CD4-positive, alpha-beta memory T cell (primary cell): ENCODE measurements at regions of chr10 and their contacts with region 1.

Region 1: DNA sequence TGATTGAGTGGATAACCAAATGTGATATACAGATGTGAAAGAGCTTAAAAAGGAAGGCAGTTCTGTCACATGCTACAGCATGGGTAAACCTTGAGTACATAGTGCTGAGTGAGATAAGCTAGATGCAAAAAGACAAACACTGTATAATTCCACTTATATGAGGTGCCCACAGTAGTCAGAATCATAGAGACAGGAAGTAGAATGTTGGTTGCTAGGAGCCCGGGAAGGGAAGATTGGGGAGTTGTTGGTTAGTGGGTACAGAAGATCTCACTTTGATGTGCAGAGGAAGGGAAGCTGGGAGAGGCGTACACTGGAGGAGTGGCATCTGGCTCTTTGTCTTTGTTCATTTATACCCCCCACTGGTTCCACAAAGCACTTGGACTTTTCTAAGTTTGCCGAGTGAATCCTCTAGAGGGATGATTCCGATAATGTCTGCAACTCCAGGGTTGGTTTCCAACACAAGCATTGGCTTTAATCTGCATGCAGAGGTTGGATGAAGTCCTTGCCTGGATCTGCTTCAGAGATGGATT is 39.5 kb downstream of the TSPAN14 start:
- DNase-seq: peak in 4 of 5 donors; percentile 49 to 73 (median 52)
- H3K4me3 ChIP-seq: no peak overlapping the region
- H3K4me3 Mint-ChIP-seq: peak overlapping the region; percentile 49 to 81 (median 70)
- H3K27ac ChIP-seq: peak overlapping the region; percentile 41
- H3K27ac Mint-ChIP-seq: peak overlapping the region; percentile 53 to 87 (median 77)
- H3K4me1 ChIP-seq: peaks cover 100% of the 10 kb centered on the region
- H3K4me1 Mint-ChIP-seq: peaks cover 90 to 100% (median 94%) of the 10 kb centered on the region in 4 donors
- H3K27me3 ChIP-seq: no peaks in the 10 kb centered on the region
- H3K27me3 Mint-ChIP-seq: no peaks in the 10 kb centered on the region

Region 2: GRCh38 chr10:80453701-80454513 is 39.7 kb before region 1 on chr10 and contains the start of gene TSPAN14:
- CTCF ChIA-PET with region 1: interaction called, 814 read pairs
- POLR2A ChIA-PET with region 1: interaction called, 906 read pairs
- intact Hi-C with region 1: loop called (anchors 1 kb)
- DNase-seq: peak; percentile 66 to 76 (median 73)
- H3K4me3 ChIP-seq: peak within 1 kb of the TSS; percentile 70 to 76
- H3K4me3 Mint-ChIP-seq: peak within 1 kb of the TSS; percentile 90 to 100 (median 98)
- H3K27ac ChIP-seq: peak within 1 kb of the TSS; percentile 83
- H3K27ac Mint-ChIP-seq: peak within 1 kb of the TSS; percentile 93 to 100 (median 96)
- H3K4me1 ChIP-seq: peaks cover 31% of the 10 kb centered on the region
- H3K4me1 Mint-ChIP-seq: peaks cover 29 to 53% (median 35%) of the 10 kb centered on the region in 4 donors
- H3K27me3 ChIP-seq: no peaks in the 10 kb centered on the region
- H3K27me3 Mint-ChIP-seq: no peaks in the 10 kb centered on the region
- total RNA-seq, gene TSPAN14: 151 to 153 TPM

Region 3: GRCh38 chr10:80459047-80459931 is 34.3 kb before region 1 on chr10:
- CTCF ChIA-PET with region 1: interaction called, 814 read pairs
- POLR2A ChIA-PET with region 1: interaction called, 906 read pairs
- intact Hi-C with region 1: loop called (anchors 1 kb)
- DNase-seq: peak; percentile 51 to 83 (median 66)
- H3K4me3 ChIP-seq: peak overlapping the region; percentile 67 to 76
- H3K4me3 Mint-ChIP-seq: peak overlapping the region; percentile 90 to 100 (median 98)
- H3K27ac ChIP-seq: peak overlapping the region; percentile 83
- H3K27ac Mint-ChIP-seq: peak overlapping the region; percentile 88 to 100 (median 96)
- H3K4me1 ChIP-seq: peaks cover 84% of the 10 kb centered on the region
- H3K4me1 Mint-ChIP-seq: peaks cover 71 to 93% (median 79%) of the 10 kb centered on the region in 4 donors
- H3K27me3 ChIP-seq: no peaks in the 10 kb centered on the region
- H3K27me3 Mint-ChIP-seq: no peaks in the 10 kb centered on the region

Region 4: GRCh38 chr10:80464557-80465450 is 28.8 kb before region 1 on chr10:
- CTCF ChIA-PET with region 1: interaction called, 516 read pairs
- POLR2A ChIA-PET with region 1: interaction called, 906 read pairs
- intact Hi-C with region 1: no loop called
- DNase-seq: no peak
- H3K4me3 ChIP-seq: peak overlapping the region; percentile 48 to 58
- H3K4me3 Mint-ChIP-seq: peak overlapping the region; percentile 83 to 100 (median 96)
- H3K27ac ChIP-seq: peak overlapping the region; percentile 83
- H3K27ac Mint-ChIP-seq: peak overlapping the region; percentile 93 to 100 (median 96)
- H3K4me1 ChIP-seq: peaks cover 100% of the 10 kb centered on the region
- H3K4me1 Mint-ChIP-seq: peaks cover 79 to 100% (median 93%) of the 10 kb centered on the region in 4 donors
- H3K27me3 ChIP-seq: no peaks in the 10 kb centered on the region
- H3K27me3 Mint-ChIP-seq: no peaks in the 10 kb centered on the region

Region 5: GRCh38 chr10:80609331-80609730 is 115.7 kb after region 1 on chr10:
- CTCF ChIA-PET with region 1: no interaction called
- POLR2A ChIA-PET with region 1: no interaction called
- intact Hi-C with region 1: no loop called
- DNase-seq: no peak
- H3K4me3 ChIP-seq: no peak overlapping the region
- H3K4me3 Mint-ChIP-seq: no peak overlapping the region
- H3K27ac ChIP-seq: no peak overlapping the region
- H3K27ac Mint-ChIP-seq: no peak overlapping the region
- H3K4me1 ChIP-seq: no peaks in the 10 kb centered on the region
- H3K4me1 Mint-ChIP-seq: peaks cover 0 to 5% (median 0%) of the 10 kb centered on the region in 4 donors
- H3K27me3 ChIP-seq: no peaks in the 10 kb centered on the region
- H3K27me3 Mint-ChIP-seq: peaks cover 2 to 3% of the 10 kb centered on the region in 2 donors